ENCODE measurements at regions of chr2 and their contacts with region 1.

Region 1: GRCh38 chr2:179037807-179038206 is 12.1 kb downstream of the CCDC141 start:
- DNase-seq: no peak
- ATAC-seq: peak; percentile 69
- H3K4me3 ChIP-seq: no peak overlapping the region
- H3K27ac ChIP-seq: no peak overlapping the region
- H3K4me1 ChIP-seq: peaks cover 19% of the 10 kb centered on the region
- H3K27me3 ChIP-seq: no peaks in the 10 kb centered on the region
- CTCF ChIP-seq: no peak
- EP300 ChIP-seq: no peak; a peak in 1 of 4 replicates
- POLR2A ChIP-seq: no peak
- RAD21 ChIP-seq: no peak

Region 2: DNA sequence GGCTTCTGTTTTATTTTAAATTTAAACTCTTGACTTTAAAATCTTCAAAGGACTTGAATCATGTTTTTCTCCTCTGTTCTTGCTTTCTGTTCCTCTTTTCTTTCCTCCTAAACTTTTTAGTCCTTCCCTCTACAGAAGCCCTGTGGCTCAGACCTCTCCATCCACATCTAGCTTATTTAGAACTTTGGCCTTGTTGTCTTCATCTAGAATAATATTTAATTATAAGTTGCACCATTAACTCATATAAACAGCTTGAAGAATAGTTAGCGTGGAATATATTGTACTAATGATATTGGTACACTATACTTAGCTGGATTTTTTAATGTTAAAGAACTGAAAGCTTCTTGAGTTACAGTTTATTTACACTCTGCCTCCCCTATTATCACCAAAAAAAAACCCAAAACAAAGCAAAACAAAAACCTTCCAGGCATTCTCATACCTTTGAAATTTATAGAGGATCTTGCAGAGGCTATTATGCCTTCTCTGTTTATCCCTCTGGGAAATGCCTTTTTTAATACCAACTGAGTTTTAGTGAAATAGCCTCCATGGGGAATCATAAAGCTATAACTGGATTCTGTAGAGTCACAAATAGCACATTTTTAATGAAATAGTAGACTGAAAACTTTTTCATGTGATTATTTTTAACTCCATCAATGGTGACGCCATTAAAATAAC is 21.4 kb after region 1 on chr2:
- CTCF ChIA-PET with region 1: no interaction called
- POLR2A ChIA-PET with region 1: interaction called, 10 read pairs
- RAD21 ChIA-PET with region 1: interaction called, 5 read pairs
- SMC1A ChIA-PET with region 1: interaction called, 5 read pairs
- in situ Hi-C with region 1: no loop called
- intact Hi-C with region 1: no loop called
- DNase-seq: no peak
- ATAC-seq: peak; percentile 94
- H3K4me3 ChIP-seq: no peak overlapping the region
- H3K27ac ChIP-seq: peak overlapping the region; percentile 4; the same call in 1 of the 2 replicates
- H3K4me1 ChIP-seq: peaks cover 9% of the 10 kb centered on the region
- H3K27me3 ChIP-seq: no peaks in the 10 kb centered on the region
- CTCF ChIP-seq: no peak
- EP300 ChIP-seq: no peak
- POLR2A ChIP-seq: no peak
- RAD21 ChIP-seq: no peak

Measured in GM12878 (cell line).